ENCODE measurements at regions of chr16 and their contacts with region 1.

Region 1: GRCh38 chr16:27154705-27155521 is 48.4 kb upstream of the KDM8 start:
- DNase-seq: peak; percentile 26 to 74 (median 56)
- ATAC-seq: peak; percentile 90
- H3K4me3 ChIP-seq: no peak overlapping the region
- H3K4me3 Mint-ChIP-seq: peak overlapping the region in 2 of 10 donors; percentile 3 to 16
- H3K27ac ChIP-seq: no peak overlapping the region
- H3K27ac Mint-ChIP-seq: peak overlapping the region in 7 of 9 donors; percentile 18 to 91 (median 61)
- H3K4me1 ChIP-seq: peaks cover 0 to 8% of the 10 kb centered on the region in 2 donors
- H3K4me1 Mint-ChIP-seq: peaks cover 6 to 28% (median 15%) of the 10 kb centered on the region in 7 donors
- H3K27me3 ChIP-seq: no peaks in the 10 kb centered on the region
- H3K27me3 Mint-ChIP-seq: no peaks in the 10 kb centered on the region

Region 2: DNA sequence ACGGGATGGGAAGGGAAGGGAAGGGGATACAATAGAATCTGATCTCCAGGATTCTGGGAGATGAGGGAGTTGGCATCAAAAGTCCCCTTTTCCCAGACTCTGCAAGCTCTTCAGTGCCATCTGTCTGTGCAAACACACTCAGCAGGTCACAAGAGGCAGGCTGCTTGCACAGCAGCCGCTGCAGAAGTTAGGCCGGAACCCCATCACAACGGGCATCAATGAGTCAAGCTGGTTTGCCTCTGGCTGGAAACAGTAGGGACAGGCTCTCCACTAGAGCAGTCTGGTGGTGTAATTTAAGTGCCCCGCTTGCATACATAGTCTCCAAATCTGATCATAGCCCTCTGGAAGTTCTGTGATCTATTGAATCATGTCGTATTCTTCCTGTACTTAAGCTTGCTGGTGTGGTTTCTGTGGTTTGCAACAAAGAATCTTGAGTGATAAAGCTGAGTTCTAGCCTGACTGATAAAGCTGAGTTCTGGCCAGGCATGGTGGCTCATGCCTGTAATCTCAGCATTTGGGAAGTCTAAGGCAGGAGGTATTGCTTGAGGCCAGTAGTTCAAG is 14.7 kb after region 1 on chr16:
- CTCF ChIA-PET with region 1: interaction called, 27 read pairs
- POLR2A ChIA-PET with region 1: interaction called, 11 read pairs
- intact Hi-C with region 1: no loop called
- DNase-seq: peak; percentile 32 to 92 (median 88)
- ATAC-seq: peak; percentile 94
- H3K4me3 ChIP-seq: peak overlapping the region; percentile 7
- H3K4me3 Mint-ChIP-seq: peak overlapping the region; percentile 38 to 78 (median 70)
- H3K27ac ChIP-seq: peak overlapping the region; percentile 64
- H3K27ac Mint-ChIP-seq: peak overlapping the region; percentile 67 to 96 (median 91)
- H3K4me1 ChIP-seq: peaks cover 53 to 60% of the 10 kb centered on the region in 2 donors
- H3K4me1 Mint-ChIP-seq: peaks cover 38 to 78% (median 74%) of the 10 kb centered on the region in 7 donors
- H3K27me3 ChIP-seq: no peaks in the 10 kb centered on the region
- H3K27me3 Mint-ChIP-seq: peaks cover 0 to 3% (median 0%) of the 10 kb centered on the region in 5 donors

Region 3: GRCh38 chr16:27195941-27196595 is 41.2 kb after region 1 on chr16:
- CTCF ChIA-PET with region 1: interaction called, 9 read pairs
- POLR2A ChIA-PET with region 1: interaction called, 3 read pairs
- intact Hi-C with region 1: loop called in 1 of 2 experiments (anchors 1 kb)
- DNase-seq: peak in 7 of 9 donors; percentile 82 to 93 (median 90)
- ATAC-seq: peak; percentile 96
- H3K4me3 ChIP-seq: peak overlapping the region; percentile 41
- H3K4me3 Mint-ChIP-seq: peak overlapping the region; percentile 58 to 80 (median 72)
- H3K27ac ChIP-seq: peak overlapping the region; percentile 73
- H3K27ac Mint-ChIP-seq: peak overlapping the region; percentile 80 to 99 (median 95)
- H3K4me1 ChIP-seq: peaks cover 46 to 70% of the 10 kb centered on the region in 2 donors
- H3K4me1 Mint-ChIP-seq: peaks cover 52 to 83% (median 78%) of the 10 kb centered on the region in 7 donors
- H3K27me3 ChIP-seq: no peaks in the 10 kb centered on the region
- H3K27me3 Mint-ChIP-seq: no peaks in the 10 kb centered on the region

Region 4: DNA sequence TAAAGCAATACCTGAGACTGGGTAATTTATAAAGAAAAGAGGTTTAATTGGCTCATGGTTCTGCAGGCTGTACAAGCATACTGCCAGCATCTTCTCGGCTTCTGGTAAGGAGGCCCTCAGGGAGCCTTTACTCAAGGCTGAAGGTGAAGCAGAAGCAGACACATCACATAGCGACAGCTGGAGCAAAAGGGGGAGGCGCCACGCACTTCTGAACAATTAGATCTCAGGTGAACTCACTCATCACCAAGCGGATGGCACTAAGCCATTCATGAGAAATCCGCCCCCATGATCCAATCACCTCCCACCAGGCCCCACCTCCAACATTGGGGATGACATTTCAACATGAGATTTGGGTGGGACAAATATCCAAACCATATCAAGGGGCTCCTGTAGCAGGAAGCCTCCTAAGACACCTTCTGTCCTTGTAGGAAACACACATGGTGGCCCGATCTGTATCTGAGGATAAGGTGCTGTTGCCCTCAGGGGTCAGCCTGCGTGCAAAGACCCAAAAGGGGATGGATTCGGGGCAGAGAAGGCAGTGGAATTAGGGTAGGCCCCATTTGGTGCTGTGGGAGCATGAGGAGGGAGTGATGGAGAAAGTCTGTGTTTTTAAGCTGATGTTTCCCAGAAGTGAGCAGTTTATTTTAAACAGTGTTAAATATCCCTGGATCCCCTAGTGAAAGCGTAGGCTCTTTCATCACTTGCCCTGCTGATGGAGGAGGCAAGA is 270.0 kb after region 1 on chr16:
- CTCF ChIA-PET with region 1: no interaction called
- POLR2A ChIA-PET with region 1: no interaction called
- intact Hi-C with region 1: no loop called
- DNase-seq: peak in 1 of 9 donors; percentile 13
- ATAC-seq: no peak
- H3K4me3 ChIP-seq: no peak overlapping the region
- H3K4me3 Mint-ChIP-seq: peak overlapping the region in 1 of 10 donors; percentile 55
- H3K27ac ChIP-seq: no peak overlapping the region
- H3K27ac Mint-ChIP-seq: peak overlapping the region; percentile 26 to 85 (median 56)
- H3K4me1 ChIP-seq: peaks cover 15 to 21% of the 10 kb centered on the region in 2 donors
- H3K4me1 Mint-ChIP-seq: peaks cover 25 to 75% (median 59%) of the 10 kb centered on the region in 7 donors
- H3K27me3 ChIP-seq: no peaks in the 10 kb centered on the region
- H3K27me3 Mint-ChIP-seq: no peaks in the 10 kb centered on the region

Region 5: GRCh38 chr16:27461483-27462171 is 306.7 kb after region 1 on chr16:
- CTCF ChIA-PET with region 1: interaction called, 4 read pairs
- POLR2A ChIA-PET with region 1: no interaction called
- intact Hi-C with region 1: loop called (anchors 1 kb)
- DNase-seq: no peak
- ATAC-seq: no peak
- H3K4me3 ChIP-seq: no peak overlapping the region
- H3K4me3 Mint-ChIP-seq: no peak overlapping the region
- H3K27ac ChIP-seq: no peak overlapping the region
- H3K27ac Mint-ChIP-seq: peak overlapping the region in 8 of 9 donors; percentile 16 to 64 (median 44)
- H3K4me1 ChIP-seq: peaks cover 40 to 60% of the 10 kb centered on the region in 2 donors
- H3K4me1 Mint-ChIP-seq: peaks cover 24 to 75% (median 39%) of the 10 kb centered on the region in 7 donors
- H3K27me3 ChIP-seq: no peaks in the 10 kb centered on the region
- H3K27me3 Mint-ChIP-seq: no peaks in the 10 kb centered on the region